Prostate gland (tissue), 2 donors: ENCODE measurements at regions of chr11 and their contacts with region 1.

Region 1: GRCh38 chr11:94330789-94331188 is 26.4 kb downstream of the IZUMO1R start:
- DNase-seq: no peak
- H3K4me3 ChIP-seq: no peak overlapping the region
- H3K27ac ChIP-seq: no peak overlapping the region
- H3K4me1 ChIP-seq: no peaks in the 10 kb centered on the region
- H3K27me3 ChIP-seq: no peaks in the 10 kb centered on the region
- CTCF ChIP-seq: no peak
- POLR2A ChIP-seq: no peak

Region 2: GRCh38 chr11:94398101-94398500 is 67.3 kb after region 1 on chr11:
- intact Hi-C with region 1: loop called (anchors 10 kb)
- DNase-seq: no peak
- H3K4me3 ChIP-seq: no peak overlapping the region
- H3K27ac ChIP-seq: no peak overlapping the region
- H3K4me1 ChIP-seq: peaks cover 4% of the 10 kb centered on the region
- H3K27me3 ChIP-seq: peaks cover 10% of the 10 kb centered on the region
- CTCF ChIP-seq: no peak
- POLR2A ChIP-seq: no peak